Activated B cell treated with CpG ODN at 0.5 μM for 24 hours (primary cell): ENCODE measurements at regions of chr15 and their contacts with region 1.

Region 1: GRCh38 chr15:71800835-71801745 is 9.3 kb upstream of the NR2E3 start:
- DNase-seq: no peak
- ATAC-seq: no peak
- H3K4me3 Mint-ChIP-seq: no peak overlapping the region
- H3K27ac Mint-ChIP-seq: no peak overlapping the region
- H3K4me1 Mint-ChIP-seq: peaks cover 2% of the 10 kb centered on the region
- H3K27me3 Mint-ChIP-seq: peaks cover 15% of the 10 kb centered on the region
- CTCF ChIP-seq: no peak

Region 2: GRCh38 chr15:71743861-71744382 is 57.2 kb before region 1 on chr15:
- CTCF ChIA-PET with region 1: interaction called, 9 read pairs
- POLR2A ChIA-PET with region 1: no interaction called
- intact Hi-C with region 1: loop called (anchors 1 kb)
- DNase-seq: no peak
- ATAC-seq: peak; percentile 37
- H3K4me3 Mint-ChIP-seq: no peak overlapping the region
- H3K27ac Mint-ChIP-seq: no peak overlapping the region
- H3K4me1 Mint-ChIP-seq: no peaks in the 10 kb centered on the region
- H3K27me3 Mint-ChIP-seq: peaks cover 10% of the 10 kb centered on the region
- CTCF ChIP-seq: peak; percentile 92